ENCODE measurements at regions of chr2 and their contacts with region 1.

Region 1: GRCh38 chr2:85327822-85328617 is at the start of gene TGOLN2:
- H3K4me3 Mint-ChIP-seq: peak within 1 kb of the TSS; percentile 98
- H3K27ac Mint-ChIP-seq: peak within 1 kb of the TSS; percentile 99
- H3K4me1 Mint-ChIP-seq: peaks cover 42% of the 10 kb centered on the region
- H3K27me3 Mint-ChIP-seq: no peaks in the 10 kb centered on the region

Region 2: DNA sequence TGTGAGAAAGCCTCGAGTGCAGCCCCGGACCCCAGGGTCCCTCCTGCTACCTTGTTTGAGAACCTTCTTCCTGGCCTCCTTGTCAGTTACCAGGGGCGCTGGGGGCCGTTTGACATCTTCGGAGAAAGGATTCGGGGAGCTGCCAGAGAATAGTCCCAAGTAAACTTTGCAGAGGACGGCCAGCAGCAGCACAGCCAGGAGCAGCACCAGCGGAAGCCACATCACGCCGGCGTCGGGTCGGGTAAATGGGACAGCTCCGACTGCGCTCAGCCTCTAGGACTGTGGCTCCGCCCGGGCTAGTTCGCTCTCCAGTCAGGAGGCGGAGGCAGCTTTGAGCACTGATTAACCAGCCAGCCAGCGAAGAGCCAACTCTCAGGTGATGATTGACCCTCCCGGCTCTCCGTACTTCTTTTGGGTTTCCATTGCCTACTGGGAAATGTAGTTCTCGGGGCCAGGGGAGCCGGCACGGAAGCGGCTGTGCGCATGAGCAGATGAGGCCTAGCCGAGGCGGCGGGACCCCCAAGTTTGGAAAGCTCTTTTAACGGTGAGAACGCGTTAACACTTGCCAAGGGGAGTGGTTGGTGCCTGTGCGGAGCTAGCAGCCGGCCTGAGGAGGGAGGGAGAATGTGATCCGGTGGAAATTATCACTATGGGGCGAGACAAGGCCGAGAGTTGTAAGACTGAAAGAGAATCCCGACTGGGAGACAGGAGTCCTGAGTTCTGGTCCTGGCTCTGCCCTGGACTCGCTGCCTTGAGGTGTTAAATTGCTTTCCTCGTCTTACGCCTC is 26.5 kb after region 1 on chr2 and contains the starts of genes ELMOD3 and RETSAT:
- intact Hi-C with region 1: loop called (anchors 1 kb)
- H3K4me3 Mint-ChIP-seq: peak within 1 kb of the TSS; percentile 98
- H3K27ac Mint-ChIP-seq: peak within 1 kb of the TSS; percentile 96
- H3K4me1 Mint-ChIP-seq: peaks cover 42% of the 10 kb centered on the region
- H3K27me3 Mint-ChIP-seq: no peaks in the 10 kb centered on the region